ENCODE measurements at regions of chr4 and their contacts with region 1.

Region 1: DNA sequence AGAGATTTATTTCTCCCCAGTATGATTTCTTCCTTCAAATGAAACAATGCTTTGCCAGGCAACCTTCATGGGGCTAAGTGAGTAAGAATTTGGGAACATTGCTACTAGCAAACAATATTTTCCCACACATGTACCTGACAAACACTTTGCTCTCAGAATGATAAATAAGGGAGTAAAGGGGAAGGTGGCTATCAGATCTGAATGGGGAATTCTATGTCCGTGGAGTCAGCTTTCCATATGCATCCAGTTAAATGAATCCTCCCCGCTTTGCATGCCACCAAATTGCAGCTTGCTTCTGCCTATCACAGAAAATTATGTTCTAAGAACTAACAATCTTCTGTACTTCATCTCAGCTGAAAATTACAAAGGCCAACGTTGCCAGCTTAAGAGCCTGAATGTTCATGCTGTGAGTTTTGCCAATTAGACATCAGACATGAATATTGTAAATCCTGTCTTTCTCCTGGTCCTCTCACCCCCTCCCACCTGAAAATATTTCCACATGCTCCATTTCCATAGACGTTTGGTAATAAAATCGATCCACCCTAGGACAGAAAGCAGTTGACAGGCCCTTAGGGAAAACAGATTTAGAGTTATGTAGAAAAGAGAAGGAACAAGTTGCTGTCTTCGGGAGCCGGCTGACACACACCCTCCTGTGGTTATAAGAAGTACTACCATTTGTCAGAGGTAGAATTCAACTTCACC is 6.3 kb downstream of the MEPE start:
- DNase-seq: peak; percentile 42
- H3K4me3 ChIP-seq: no peak overlapping the region
- H3K27ac ChIP-seq: no peak overlapping the region
- H3K4me1 ChIP-seq: no peaks in the 10 kb centered on the region
- H3K27me3 ChIP-seq: no peaks in the 10 kb centered on the region
- CTCF ChIP-seq: peak; percentile 59

Region 2: DNA sequence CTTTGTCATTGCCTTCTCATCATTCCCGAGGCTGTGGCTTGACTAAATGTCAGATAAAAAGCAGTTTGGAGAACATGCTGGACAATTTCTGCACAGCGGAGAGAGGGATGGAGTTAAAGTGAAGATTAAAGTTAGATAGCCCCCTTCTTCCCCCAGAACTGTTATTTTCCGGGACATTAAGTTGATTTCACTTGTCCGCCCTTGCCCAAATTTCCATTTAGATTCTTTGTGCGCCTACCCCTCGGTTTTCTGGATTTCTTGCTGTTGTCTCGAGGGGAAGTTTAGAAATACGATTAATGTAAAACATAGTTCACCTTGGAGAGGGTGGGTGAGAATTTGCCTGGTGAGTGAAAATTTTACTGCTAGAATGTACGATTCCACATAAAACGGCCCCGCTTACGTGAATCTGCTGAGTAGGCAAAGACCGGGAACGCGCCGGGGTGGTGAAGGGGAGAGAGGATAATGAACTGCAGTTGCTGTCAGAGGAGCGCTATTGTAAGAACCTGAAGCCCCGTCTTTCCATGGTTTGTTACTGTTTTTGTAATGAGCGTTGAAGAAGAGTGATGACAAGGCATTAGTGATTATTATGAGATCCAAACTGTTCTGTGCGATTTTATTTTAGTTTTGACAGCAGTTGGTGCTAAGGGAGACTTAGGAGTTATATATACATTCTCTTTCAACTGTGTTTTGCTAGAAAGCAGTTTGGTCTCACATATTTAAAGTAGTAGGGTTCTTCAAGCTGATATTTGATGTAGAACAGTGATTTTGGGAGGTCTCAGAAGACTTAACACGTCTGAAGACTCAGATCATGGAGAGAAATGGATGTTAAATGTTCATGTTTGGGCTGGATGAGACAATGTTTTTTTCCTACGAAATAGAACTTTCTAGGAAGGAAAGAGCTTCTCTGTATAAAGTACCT is 831.3 kb before region 1 on chr4:
- CTCF ChIA-PET with region 1: no interaction called
- POLR2A ChIA-PET with region 1: no interaction called
- intact Hi-C with region 1: no loop called
- DNase-seq: peak; percentile 59
- H3K4me3 ChIP-seq: peak overlapping the region; percentile 92
- H3K27ac ChIP-seq: peak overlapping the region; percentile 96
- H3K4me1 ChIP-seq: peaks cover 36% of the 10 kb centered on the region
- H3K27me3 ChIP-seq: no peaks in the 10 kb centered on the region
- CTCF ChIP-seq: no peak

Region 3: DNA sequence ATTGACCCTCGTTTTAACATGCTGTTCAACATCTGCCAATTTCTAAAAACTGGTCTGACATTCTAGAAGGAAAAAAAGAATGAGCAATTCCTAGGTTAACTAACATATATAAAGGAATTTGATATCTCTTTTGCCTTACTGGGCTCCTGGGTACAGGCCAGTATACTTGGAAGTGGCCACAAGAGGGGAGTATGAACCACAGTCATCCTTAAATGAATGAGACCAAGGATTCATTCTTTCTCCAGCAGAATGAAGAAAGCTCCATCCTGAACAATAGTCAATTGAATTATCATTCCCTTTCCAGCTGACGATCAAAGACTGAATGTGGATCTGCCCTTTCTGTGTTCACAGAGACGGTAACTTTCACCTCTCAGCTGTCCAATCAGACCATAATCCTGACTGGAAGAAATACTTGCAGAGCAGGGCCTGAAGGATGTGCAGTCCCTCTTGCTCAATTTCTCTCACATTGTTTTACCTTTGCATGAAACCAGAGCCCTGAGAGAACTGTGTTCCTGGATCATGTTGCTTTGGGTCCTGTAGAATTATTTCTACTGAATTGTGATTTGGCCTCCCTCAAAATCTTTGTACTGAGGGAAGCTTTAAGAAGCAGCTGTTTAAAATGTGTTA is 295.1 kb before region 1 on chr4:
- CTCF ChIA-PET with region 1: interaction called, 10 read pairs
- POLR2A ChIA-PET with region 1: no interaction called
- intact Hi-C with region 1: loop called (anchors 2 kb)
- DNase-seq: peak; percentile 33
- H3K4me3 ChIP-seq: no peak overlapping the region
- H3K27ac ChIP-seq: no peak overlapping the region
- H3K4me1 ChIP-seq: no peaks in the 10 kb centered on the region
- H3K27me3 ChIP-seq: no peaks in the 10 kb centered on the region
- CTCF ChIP-seq: peak; percentile 57

Region 4: GRCh38 chr4:87688316-87688715 is 150.7 kb before region 1 on chr4:
- CTCF ChIA-PET with region 1: no interaction called
- POLR2A ChIA-PET with region 1: no interaction called
- intact Hi-C with region 1: no loop called
- DNase-seq: no peak
- H3K4me3 ChIP-seq: no peak overlapping the region
- H3K27ac ChIP-seq: no peak overlapping the region
- H3K4me1 ChIP-seq: no peaks in the 10 kb centered on the region
- H3K27me3 ChIP-seq: no peaks in the 10 kb centered on the region
- CTCF ChIP-seq: no peak

Region 5: GRCh38 chr4:87853108-87853507 is 14.1 kb after region 1 on chr4:
- CTCF ChIA-PET with region 1: no interaction called
- POLR2A ChIA-PET with region 1: no interaction called
- intact Hi-C with region 1: no loop called
- DNase-seq: peak; percentile 61
- H3K4me3 ChIP-seq: no peak overlapping the region
- H3K27ac ChIP-seq: no peak overlapping the region
- H3K4me1 ChIP-seq: no peaks in the 10 kb centered on the region
- H3K27me3 ChIP-seq: no peaks in the 10 kb centered on the region
- CTCF ChIP-seq: peak; percentile 46; the same call in 1 of the 2 replicates

Region 6: GRCh38 chr4:87973283-87974169 is 134.5 kb after region 1 on chr4:
- CTCF ChIA-PET with region 1: no interaction called
- POLR2A ChIA-PET with region 1: no interaction called
- intact Hi-C with region 1: no loop called
- DNase-seq: peak; percentile 63
- H3K4me3 ChIP-seq: no peak overlapping the region
- H3K27ac ChIP-seq: no peak overlapping the region
- H3K4me1 ChIP-seq: no peaks in the 10 kb centered on the region
- H3K27me3 ChIP-seq: no peaks in the 10 kb centered on the region
- CTCF ChIP-seq: peak; percentile 58

Measured in A673 (cell line).